Activated CD4-positive, alpha-beta T cell treated with anti-CD3 and anti-CD28 coated beads for 36 hours (primary cell): ENCODE measurements at regions of chr11 and their contacts with region 1.

Region 1: GRCh38 chr11:64317957-64318693 is at the start of gene PRDX5:
- DNase-seq: peak; percentile 97
- ATAC-seq: peak; percentile 84
- H3K4me3 Mint-ChIP-seq: peak within 1 kb of the TSS; percentile 97
- H3K27ac Mint-ChIP-seq: peak within 1 kb of the TSS; percentile 99
- H3K4me1 Mint-ChIP-seq: peaks cover 26% of the 10 kb centered on the region
- H3K27me3 Mint-ChIP-seq: no peaks in the 10 kb centered on the region
- total RNA-seq, gene PRDX5: 110 to 142 TPM

Region 2: GRCh38 chr11:64165849-64166635 is 152.1 kb before region 1 on chr11 and contains the start of gene MACROD1:
- CTCF ChIA-PET with region 1: no interaction called
- POLR2A ChIA-PET with region 1: no interaction called
- intact Hi-C with region 1: no loop called
- DNase-seq: peak; percentile 92
- ATAC-seq: peak; percentile 94
- H3K4me3 Mint-ChIP-seq: peak within 1 kb of the TSS; percentile 92
- H3K27ac Mint-ChIP-seq: peak within 1 kb of the TSS; percentile 83
- H3K4me1 Mint-ChIP-seq: peaks cover 9% of the 10 kb centered on the region
- H3K27me3 Mint-ChIP-seq: no peaks in the 10 kb centered on the region
- total RNA-seq, gene MACROD1: 26.4 to 28.6 TPM

Region 3: DNA sequence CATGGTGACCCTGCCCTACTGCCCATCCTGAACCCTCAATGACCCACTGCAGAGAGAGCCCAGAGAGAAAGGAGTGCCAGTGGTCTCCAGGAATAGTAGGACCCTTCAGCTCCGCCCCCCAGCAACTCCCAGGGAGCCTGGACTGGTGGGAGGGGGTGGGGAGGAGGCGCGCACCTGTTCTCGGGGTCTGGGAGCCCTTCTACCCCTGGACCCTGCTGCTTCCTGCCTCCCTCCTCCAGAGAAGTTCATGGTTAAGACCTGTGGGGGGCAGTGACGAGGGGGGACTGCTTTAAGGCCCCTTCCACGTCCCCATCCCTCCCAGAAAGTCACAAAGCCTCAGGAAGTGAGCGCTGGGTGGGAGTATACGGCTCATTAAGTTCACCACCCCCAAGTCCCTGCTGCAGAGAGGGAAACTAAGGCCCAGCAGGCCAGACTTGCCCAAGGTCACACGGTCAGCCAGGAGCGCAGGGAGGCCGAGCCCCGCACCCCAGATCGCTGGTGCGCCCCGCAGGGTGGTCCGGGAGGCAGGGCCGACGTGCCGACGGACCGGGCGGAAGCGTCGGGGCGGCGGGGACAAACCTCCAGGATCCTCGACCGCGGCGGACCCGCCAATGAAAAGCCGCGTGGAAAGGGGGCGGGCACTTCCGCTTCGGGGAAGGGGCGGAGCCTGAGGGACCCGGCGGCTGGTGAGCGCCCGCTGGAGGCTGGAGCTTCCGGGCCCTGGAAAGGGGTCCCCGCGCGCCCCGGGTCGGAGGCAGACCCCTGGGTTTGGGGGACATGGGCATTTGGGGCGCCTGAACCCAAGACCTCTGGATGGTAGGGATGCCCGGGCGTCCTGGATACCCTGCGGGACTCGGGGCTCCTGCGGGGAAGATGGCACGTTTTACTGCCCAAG is 92.3 kb before region 1 on chr11 and contains the starts of genes NUDT22 and TRPT1:
- CTCF ChIA-PET with region 1: interaction called, 4 read pairs
- POLR2A ChIA-PET with region 1: interaction called, 3 read pairs
- intact Hi-C with region 1: loop called in 1 of 2 experiments (anchors 1 kb)
- DNase-seq: peak; percentile 96
- ATAC-seq: peak; percentile 72
- H3K4me3 Mint-ChIP-seq: peak within 1 kb of the TSS; percentile 87
- H3K27ac Mint-ChIP-seq: peak within 1 kb of the TSS; percentile 85
- H3K4me1 Mint-ChIP-seq: peaks cover 32% of the 10 kb centered on the region
- H3K27me3 Mint-ChIP-seq: no peaks in the 10 kb centered on the region
- total RNA-seq, gene NUDT22: 61.8 to 74.1 TPM
- total RNA-seq, gene TRPT1: 23.9 to 27.1 TPM

Region 4: GRCh38 chr11:64269380-64270234 is 48.5 kb before region 1 on chr11:
- CTCF ChIA-PET with region 1: interaction called, 3 read pairs
- POLR2A ChIA-PET with region 1: interaction called, 18 read pairs
- intact Hi-C with region 1: loop called (anchors 1 kb)
- DNase-seq: peak; percentile 98
- ATAC-seq: peak; percentile 82
- H3K4me3 Mint-ChIP-seq: peak overlapping the region; percentile 98
- H3K27ac Mint-ChIP-seq: peak overlapping the region; percentile 96
- H3K4me1 Mint-ChIP-seq: peaks cover 19% of the 10 kb centered on the region
- H3K27me3 Mint-ChIP-seq: no peaks in the 10 kb centered on the region

Region 5: GRCh38 chr11:64341851-64342791 is 24.0 kb after region 1 on chr11:
- CTCF ChIA-PET with region 1: interaction called, 10 read pairs
- POLR2A ChIA-PET with region 1: interaction called, 5 read pairs
- intact Hi-C with region 1: loop called (anchors 1 kb)
- DNase-seq: peak; percentile 96
- ATAC-seq: peak; percentile 77
- H3K4me3 Mint-ChIP-seq: no peak overlapping the region
- H3K27ac Mint-ChIP-seq: no peak overlapping the region
- H3K4me1 Mint-ChIP-seq: peaks cover 28% of the 10 kb centered on the region
- H3K27me3 Mint-ChIP-seq: no peaks in the 10 kb centered on the region

Region 6: GRCh38 chr11:64443001-64443400 is 124.9 kb after region 1 on chr11:
- CTCF ChIA-PET with region 1: no interaction called
- POLR2A ChIA-PET with region 1: no interaction called
- intact Hi-C with region 1: no loop called
- DNase-seq: no peak
- ATAC-seq: no peak
- H3K4me3 Mint-ChIP-seq: no peak overlapping the region
- H3K27ac Mint-ChIP-seq: no peak overlapping the region
- H3K4me1 Mint-ChIP-seq: peaks cover 1% of the 10 kb centered on the region
- H3K27me3 Mint-ChIP-seq: peaks cover 10% of the 10 kb centered on the region

Region 7: GRCh38 chr11:64489831-64490441 is 171.8 kb after region 1 on chr11:
- CTCF ChIA-PET with region 1: no interaction called
- POLR2A ChIA-PET with region 1: no interaction called
- intact Hi-C with region 1: no loop called
- DNase-seq: peak; percentile 75
- ATAC-seq: peak; percentile 81
- H3K4me3 Mint-ChIP-seq: no peak overlapping the region
- H3K27ac Mint-ChIP-seq: no peak overlapping the region
- H3K4me1 Mint-ChIP-seq: peaks cover 14% of the 10 kb centered on the region
- H3K27me3 Mint-ChIP-seq: peaks cover 26% of the 10 kb centered on the region